ENCODE measurements at regions of chr1 and their contacts with region 1.

Region 1: DNA sequence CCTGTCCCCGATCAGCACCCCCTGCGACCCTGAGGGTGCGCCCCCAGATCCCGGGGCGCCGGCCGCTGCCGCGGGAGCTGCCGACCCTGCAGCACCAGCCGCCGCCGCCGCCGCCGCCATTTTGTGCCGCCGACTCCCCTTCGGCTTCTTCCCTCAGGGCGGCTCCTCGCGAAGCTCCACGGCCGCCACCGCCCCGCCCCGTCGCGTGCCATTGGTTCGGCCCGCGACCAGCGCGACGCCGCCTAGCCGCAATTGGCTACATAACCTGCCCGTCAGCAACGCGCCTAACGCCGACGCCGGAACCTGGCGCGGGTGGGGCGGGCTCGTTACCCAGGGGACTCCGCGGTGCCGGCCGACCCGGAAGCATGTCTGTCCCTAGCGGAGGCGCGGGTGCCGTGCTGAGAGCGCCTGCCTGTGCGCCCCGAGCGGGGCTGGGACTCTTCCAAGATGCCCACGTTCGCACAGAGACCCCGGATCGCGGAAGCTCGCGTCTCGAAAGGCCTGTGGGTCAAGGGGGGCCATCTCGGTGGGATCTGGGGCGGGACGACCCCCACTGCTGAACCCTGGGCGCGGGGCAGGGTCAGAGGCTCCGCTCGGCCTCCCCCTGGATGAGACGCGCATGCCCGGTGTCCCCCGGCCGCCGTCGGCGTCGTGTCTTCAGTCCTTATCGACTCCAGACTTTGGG is at the start of gene CCNL2:
- DNase-seq: peak; percentile 98
- H3K4me3 ChIP-seq: peak within 1 kb of the TSS; percentile 88 to 99 (median 95)
- H3K27ac ChIP-seq: peak within 1 kb of the TSS; percentile 62
- H3K4me1 ChIP-seq: peaks cover 30% of the 10 kb centered on the region
- H3K27me3 ChIP-seq: no peaks in the 10 kb centered on the region
- CTCF ChIP-seq: peak; percentile 42 to 69
- total RNA-seq, gene CCNL2: 103 to 140 TPM

Region 2: GRCh38 chr1:1187938-1188337 is 211.4 kb before region 1 on chr1:
- CTCF ChIA-PET with region 1: no interaction called
- dilution Hi-C with region 1: no loop called
- in situ Hi-C with region 1: no loop called
- intact Hi-C with region 1: no loop called
- DNase-seq: no peak
- H3K4me3 ChIP-seq: no peak overlapping the region
- H3K27ac ChIP-seq: no peak overlapping the region
- H3K4me1 ChIP-seq: peaks cover 6% of the 10 kb centered on the region
- H3K27me3 ChIP-seq: no peaks in the 10 kb centered on the region
- CTCF ChIP-seq: no peak

Region 3: GRCh38 chr1:1380420-1380819 is 18.9 kb before region 1 on chr1:
- CTCF ChIA-PET with region 1: no interaction called
- dilution Hi-C with region 1: no loop called
- in situ Hi-C with region 1: no loop called
- intact Hi-C with region 1: no loop called
- DNase-seq: no peak
- H3K4me3 ChIP-seq: no peak overlapping the region
- H3K27ac ChIP-seq: no peak overlapping the region
- H3K4me1 ChIP-seq: peaks cover 4% of the 10 kb centered on the region
- H3K27me3 ChIP-seq: no peaks in the 10 kb centered on the region
- CTCF ChIP-seq: no peak

Region 4: GRCh38 chr1:1471389-1472052 is 72.2 kb after region 1 on chr1 and contains the start of gene ATAD3B:
- CTCF ChIA-PET with region 1: no interaction called
- dilution Hi-C with region 1: no loop called
- in situ Hi-C with region 1: no loop called
- intact Hi-C with region 1: loop called (anchors 1 kb)
- DNase-seq: peak; percentile 91
- H3K4me3 ChIP-seq: peak within 1 kb of the TSS; percentile 76 to 86 (median 84)
- H3K27ac ChIP-seq: peak within 1 kb of the TSS; percentile 70
- H3K4me1 ChIP-seq: peaks cover 9% of the 10 kb centered on the region
- H3K27me3 ChIP-seq: no peaks in the 10 kb centered on the region
- CTCF ChIP-seq: no peak
- total RNA-seq, gene ATAD3B: 13.3 to 61.9 TPM

Region 5: GRCh38 chr1:1489861-1490260 is 90.5 kb after region 1 on chr1:
- CTCF ChIA-PET with region 1: no interaction called
- dilution Hi-C with region 1: no loop called
- in situ Hi-C with region 1: no loop called
- intact Hi-C with region 1: no loop called
- DNase-seq: no peak
- H3K4me3 ChIP-seq: no peak overlapping the region
- H3K27ac ChIP-seq: no peak overlapping the region
- H3K4me1 ChIP-seq: no peaks in the 10 kb centered on the region
- H3K27me3 ChIP-seq: no peaks in the 10 kb centered on the region
- CTCF ChIP-seq: no peak

Region 6: DNA sequence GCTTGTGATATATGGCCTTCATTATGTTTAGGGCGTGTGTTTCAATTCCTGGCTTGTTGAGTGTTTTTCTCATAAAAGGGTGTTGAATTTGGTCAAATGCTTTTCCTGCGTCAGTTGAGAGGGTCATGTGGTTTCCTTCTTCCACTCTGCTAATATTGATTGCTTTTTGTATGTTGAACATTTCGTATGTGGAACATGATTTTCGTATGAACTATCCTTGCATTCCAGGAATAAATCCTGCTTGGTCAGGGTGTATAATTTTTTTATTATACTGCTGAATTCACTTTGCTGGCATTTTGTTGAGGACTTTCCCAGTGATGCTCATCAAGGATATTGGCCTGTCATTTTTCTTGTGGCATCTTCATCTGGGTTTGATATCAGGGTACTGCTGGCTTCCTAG is 108.0 kb after region 1 on chr1:
- CTCF ChIA-PET with region 1: no interaction called
- dilution Hi-C with region 1: no loop called
- in situ Hi-C with region 1: no loop called
- intact Hi-C with region 1: loop called (anchors 2 kb)
- DNase-seq: no peak
- H3K4me3 ChIP-seq: no peak overlapping the region
- H3K27ac ChIP-seq: no peak overlapping the region
- H3K4me1 ChIP-seq: peaks cover 16% of the 10 kb centered on the region
- H3K27me3 ChIP-seq: no peaks in the 10 kb centered on the region
- CTCF ChIP-seq: no peak

Region 7: DNA sequence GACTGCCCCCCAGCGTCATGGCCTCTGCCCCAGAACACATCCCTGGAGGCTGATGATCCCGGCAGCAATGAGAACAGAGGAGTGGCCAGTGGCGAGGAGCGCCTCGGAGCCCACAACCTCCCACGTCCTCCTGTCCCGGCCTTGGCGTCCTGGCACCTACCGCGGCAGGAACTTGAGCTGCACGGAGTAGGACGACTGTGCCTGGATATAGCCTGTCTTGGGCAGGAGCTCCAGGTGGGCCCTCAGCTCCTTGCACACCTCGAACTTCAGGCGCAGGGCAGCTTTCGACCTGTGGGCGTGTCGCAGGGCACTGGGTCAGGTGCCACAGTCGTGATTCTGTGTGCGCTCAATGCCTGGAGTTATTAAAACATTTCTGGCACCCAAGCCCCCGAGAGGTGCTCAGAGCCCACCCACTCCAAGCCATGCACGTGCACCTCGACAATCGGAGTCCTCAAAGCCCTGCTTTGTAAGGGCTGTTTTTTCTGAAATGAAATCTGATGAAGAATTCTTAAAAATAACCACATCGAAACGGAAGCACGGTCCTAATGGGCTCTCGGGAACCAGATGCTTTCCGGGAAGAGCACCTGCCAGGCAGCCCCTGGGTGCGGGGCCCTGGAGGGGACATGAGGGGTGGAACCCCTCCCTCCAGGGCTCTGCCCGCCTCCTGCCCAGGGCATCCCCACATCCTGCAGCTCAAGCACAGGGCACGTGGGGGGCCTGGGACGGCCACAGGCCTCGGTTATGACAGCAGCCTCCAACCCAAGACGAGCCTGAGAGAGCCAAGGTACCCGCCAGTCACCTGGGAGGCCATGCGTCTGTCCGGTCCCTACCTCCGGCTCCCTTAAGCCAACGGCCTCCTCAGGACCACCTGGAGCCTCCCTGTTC is 542.8 kb after region 1 on chr1:
- CTCF ChIA-PET with region 1: no interaction called
- dilution Hi-C with region 1: no loop called
- in situ Hi-C with region 1: no loop called
- intact Hi-C with region 1: no loop called
- DNase-seq: no peak
- H3K4me3 ChIP-seq: no peak overlapping the region
- H3K27ac ChIP-seq: no peak overlapping the region
- H3K4me1 ChIP-seq: peaks cover 5% of the 10 kb centered on the region
- H3K27me3 ChIP-seq: no peaks in the 10 kb centered on the region
- CTCF ChIP-seq: no peak